GM10248 (cell line): ENCODE measurements at regions of chr1 and their contacts with region 1.

Region 1: DNA sequence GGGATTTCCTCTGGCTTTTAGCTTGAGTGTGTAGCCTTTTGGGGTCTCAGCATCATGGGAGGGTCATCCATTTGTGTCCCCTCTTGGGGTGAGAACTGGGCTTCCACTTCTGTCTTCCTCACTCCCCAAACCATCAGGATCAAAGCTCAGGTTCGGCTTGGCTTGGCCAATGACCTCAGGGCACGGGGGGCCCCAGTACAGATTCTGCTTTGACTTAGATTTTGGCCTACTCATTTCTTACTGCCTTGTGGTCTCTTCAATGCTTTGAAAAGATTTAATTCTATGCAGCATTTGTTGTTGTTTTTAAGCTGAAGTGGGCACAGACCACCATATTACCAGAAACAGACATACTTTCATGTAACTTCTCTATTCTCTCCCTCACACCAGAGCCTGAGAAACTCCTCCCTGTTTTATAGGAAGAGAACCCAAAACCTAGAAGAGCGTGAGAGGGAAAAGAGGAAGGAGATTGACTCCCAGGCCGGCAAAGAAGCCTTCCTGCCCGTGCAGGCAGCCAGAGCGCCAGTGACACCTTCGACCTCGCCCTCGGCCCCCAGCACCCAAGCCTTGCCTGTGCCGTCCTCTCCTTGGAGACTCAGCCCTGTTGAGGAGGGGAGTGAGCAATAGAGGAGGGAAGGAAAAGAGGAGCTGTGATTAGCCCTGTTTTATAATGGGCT is 1.9 kb upstream of the S100A3 start:
- DNase-seq: no peak
- CTCF ChIP-seq: no peak

Region 2: GRCh38 chr1:153488731-153489130 is 62.2 kb before region 1 on chr1:
- CTCF ChIA-PET with region 1: no interaction called
- POLR2A ChIA-PET with region 1: no interaction called
- DNase-seq: no peak
- CTCF ChIP-seq: no peak

Region 3: GRCh38 chr1:153561466-153561985 is 10.6 kb after region 1 on chr1:
- CTCF ChIA-PET with region 1: interaction called, 15 read pairs
- POLR2A ChIA-PET with region 1: interaction called, 6 read pairs
- DNase-seq: no peak
- CTCF ChIP-seq: no peak

Region 4: DNA sequence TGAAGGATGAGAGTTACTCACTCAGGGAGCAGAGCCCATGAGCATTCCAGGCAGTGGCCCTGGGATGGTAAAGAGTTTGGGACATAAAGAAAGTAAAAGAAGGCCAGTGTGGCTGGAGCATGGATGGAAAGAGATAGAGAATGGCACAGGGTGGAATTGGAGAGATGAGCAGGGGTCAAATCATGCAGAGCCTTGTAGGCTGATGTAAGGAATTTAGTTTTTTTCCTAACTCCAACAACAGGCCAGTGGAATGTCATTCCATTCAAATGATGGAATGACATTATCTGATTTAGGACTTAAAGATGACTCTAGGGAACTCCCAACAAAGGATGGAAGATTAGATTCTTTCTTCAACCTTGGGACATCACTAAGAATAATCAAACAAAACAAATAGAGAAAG is 27.5 kb after region 1 on chr1:
- CTCF ChIA-PET with region 1: no interaction called
- POLR2A ChIA-PET with region 1: no interaction called
- DNase-seq: no peak
- CTCF ChIP-seq: no peak